ENCODE measurements at regions of chr3 and their contacts with region 1.

Region 1: DNA sequence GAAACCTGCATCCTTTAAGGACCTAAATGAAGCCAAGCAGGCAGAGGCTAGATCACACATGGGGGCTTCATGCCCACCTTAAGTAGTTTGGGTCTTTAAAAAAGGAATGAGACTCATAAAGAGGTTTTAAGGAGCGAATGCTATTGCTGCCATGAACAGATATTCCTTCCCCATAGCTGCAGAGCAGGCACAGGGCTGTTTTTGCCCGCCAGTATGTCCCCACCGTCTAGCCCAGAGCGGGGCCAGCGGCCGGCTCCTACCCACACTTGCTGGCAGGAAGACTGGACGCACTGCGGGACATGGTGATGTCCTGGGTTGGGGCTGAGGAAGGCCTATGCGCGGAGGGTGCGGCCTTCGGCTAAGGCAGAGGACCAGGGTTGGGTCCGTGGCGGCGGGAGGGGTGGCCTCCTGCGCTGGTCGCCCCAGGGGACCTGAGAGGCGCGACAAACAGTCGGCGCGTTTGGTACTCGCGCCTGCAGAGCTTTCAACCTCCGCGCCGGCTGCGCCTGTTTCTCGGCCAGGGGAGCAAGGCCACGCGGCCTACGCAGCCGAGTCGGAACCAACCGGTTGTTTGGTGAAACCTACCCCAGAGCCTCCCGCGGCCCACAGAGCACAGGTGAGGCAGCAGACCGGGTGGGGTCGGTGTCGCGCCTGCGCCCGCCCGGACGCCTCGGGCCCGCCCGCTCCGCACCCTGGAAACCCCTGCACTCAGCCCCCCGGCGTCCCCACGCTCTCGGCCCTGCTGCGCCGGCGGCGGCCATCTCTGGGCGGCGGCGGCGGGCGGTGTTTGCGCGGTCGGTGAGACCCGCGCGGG is at the start of gene FAIM:
- DNase-seq: peak; percentile 59 to 75
- ATAC-seq: peak; percentile 82 to 93 (median 86)
- H3K4me3 ChIP-seq: peak within 1 kb of the TSS; percentile 33 to 95 (median 78)
- H3K27ac ChIP-seq: peak within 1 kb of the TSS; percentile 86 to 99 (median 96)
- H3K4me1 ChIP-seq: peaks cover 3 to 15% (median 12%) of the 10 kb centered on the region in 9 donors
- H3K27me3 ChIP-seq: no peaks in the 10 kb centered on the region
- CTCF ChIP-seq: no peak
- total RNA-seq, gene FAIM: 1.5 to 3.6 (median 2.7) TPM

Region 2: GRCh38 chr3:138329127-138329983 is 279.2 kb before region 1 on chr3 and contains the start of gene NME9:
- intact Hi-C with region 1: no loop called
- DNase-seq: peak; percentile 87 to 88
- ATAC-seq: peak; percentile 94 to 97 (median 96)
- H3K4me3 ChIP-seq: peak within 1 kb of the TSS; percentile 48 to 81 (median 68)
- H3K27ac ChIP-seq: peak within 1 kb of the TSS in 9 of 10 donors; percentile 25 to 74 (median 54)
- H3K4me1 ChIP-seq: peaks cover 0 to 25% (median 8%) of the 10 kb centered on the region in 9 donors
- H3K27me3 ChIP-seq: peaks cover 0 to 6% (median 0%) of the 10 kb centered on the region in 7 donors
- CTCF ChIP-seq: peak in 8 of 9 donors; percentile 22 to 66 (median 58)
- total RNA-seq, gene NME9: 0.44 TPM in 1 of 10 donors, not detected in the others

Region 3: DNA sequence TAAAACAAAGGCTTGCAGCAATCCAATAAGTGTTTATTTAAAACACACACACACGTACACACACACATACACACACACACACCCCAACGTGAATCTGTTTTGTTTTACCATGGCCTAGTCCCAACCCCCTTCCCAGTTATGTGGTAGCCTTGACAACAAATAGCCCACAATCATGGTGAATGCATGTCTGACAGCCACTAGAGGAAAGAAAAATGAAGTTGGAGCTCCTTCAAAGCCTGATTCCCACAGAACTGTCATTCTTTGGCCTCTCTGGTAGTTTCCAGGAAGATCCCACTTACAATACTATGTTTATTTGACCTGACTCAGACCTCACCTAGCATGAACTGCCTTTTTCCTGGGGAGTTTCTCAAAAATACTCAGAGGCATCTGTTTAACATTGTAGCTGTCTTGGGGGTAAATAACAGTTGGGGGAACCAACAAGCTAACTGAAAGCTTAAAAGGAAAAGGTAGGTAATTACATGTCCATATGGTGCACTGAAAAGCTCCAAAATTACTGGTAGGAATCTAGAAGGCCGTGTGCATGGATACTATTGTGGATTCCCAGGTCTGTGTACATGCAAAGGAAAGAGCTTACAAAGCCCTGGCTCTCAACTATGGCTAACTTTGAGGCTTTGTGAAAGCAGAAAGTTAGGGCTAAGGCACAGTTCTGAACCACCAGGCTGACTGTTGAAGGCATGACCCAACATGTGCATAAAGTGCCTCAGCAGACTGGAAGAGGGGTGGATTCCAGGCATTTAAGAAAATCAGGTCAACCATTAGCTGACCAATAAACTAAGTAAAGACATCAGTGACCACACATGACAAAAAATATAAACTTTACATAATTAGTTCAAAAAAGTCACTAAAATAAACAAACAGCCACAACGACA is 65.4 kb after region 1 on chr3:
- intact Hi-C with region 1: loop called in 2 of 10 experiments (anchors 10 kb)
- DNase-seq: no peak
- ATAC-seq: no peak
- H3K4me3 ChIP-seq: no peak overlapping the region
- H3K27ac ChIP-seq: no peak overlapping the region
- H3K4me1 ChIP-seq: peaks cover 0 to 26% (median 4%) of the 10 kb centered on the region in 9 donors
- H3K27me3 ChIP-seq: no peaks in the 10 kb centered on the region
- CTCF ChIP-seq: no peak

Region 4: GRCh38 chr3:138686771-138687221 is 78.3 kb after region 1 on chr3:
- intact Hi-C with region 1: loop called in 1 of 10 experiments (anchors 10 kb)
- DNase-seq: no peak
- ATAC-seq: no peak
- H3K4me3 ChIP-seq: no peak overlapping the region
- H3K27ac ChIP-seq: no peak overlapping the region
- H3K4me1 ChIP-seq: peaks cover 0 to 5% (median 0%) of the 10 kb centered on the region in 9 donors
- H3K27me3 ChIP-seq: no peaks in the 10 kb centered on the region
- CTCF ChIP-seq: no peak

Region 5: DNA sequence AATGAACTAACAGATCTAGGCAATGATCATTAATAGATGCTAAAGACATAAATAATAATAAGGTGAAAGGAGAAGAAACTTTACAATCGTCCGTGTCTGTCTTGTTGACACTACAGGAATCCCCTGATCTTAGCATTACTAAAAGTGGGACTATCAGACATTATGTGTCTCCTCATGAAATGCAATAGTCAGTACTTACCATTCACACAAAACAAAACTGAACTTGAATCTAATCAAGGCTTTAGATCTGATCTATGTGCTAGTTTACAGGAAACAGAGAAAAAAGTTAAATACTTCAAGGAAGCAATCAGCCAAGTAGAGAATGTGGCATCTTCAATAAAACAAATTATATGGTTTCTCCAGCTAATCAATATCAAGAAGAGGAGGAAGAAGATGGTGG is 152.5 kb after region 1 on chr3:
- intact Hi-C with region 1: no loop called
- DNase-seq: no peak
- ATAC-seq: no peak
- H3K4me3 ChIP-seq: no peak overlapping the region
- H3K27ac ChIP-seq: no peak overlapping the region
- H3K4me1 ChIP-seq: no peaks in the 10 kb centered on the region
- H3K27me3 ChIP-seq: no peaks in the 10 kb centered on the region
- CTCF ChIP-seq: no peak

Region 6: DNA sequence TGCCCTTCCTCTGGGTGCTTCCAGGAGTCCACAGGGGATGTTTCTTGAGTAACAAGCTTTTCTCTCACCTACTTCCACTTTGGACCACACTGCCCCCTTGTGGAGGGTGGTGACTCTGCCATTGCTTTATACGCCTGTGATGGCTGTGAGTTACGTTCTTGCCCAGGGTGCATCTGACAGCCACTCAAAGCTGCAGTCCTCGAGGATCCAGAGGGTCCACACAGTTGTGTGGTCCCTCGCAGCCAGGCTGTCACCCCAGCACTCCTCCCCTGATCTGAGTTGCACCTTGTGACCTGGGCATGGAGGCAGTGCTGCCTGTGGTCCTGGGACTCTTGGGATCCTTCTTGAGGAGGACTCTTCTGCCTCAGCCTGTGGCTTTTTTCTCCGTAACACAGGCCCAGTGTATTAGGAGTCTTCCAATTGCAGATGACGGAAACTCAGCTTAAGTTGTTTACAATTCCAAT is 315.0 kb after region 1 on chr3:
- intact Hi-C with region 1: loop called in 3 of 10 experiments (anchors 5 kb)
- DNase-seq: peak; percentile 71 to 81
- ATAC-seq: peak; percentile 61 to 82 (median 78)
- H3K4me3 ChIP-seq: no peak overlapping the region
- H3K27ac ChIP-seq: no peak overlapping the region
- H3K4me1 ChIP-seq: peaks cover 0 to 6% (median 0%) of the 10 kb centered on the region in 9 donors
- H3K27me3 ChIP-seq: peaks cover 0 to 6% (median 0%) of the 10 kb centered on the region in 7 donors
- CTCF ChIP-seq: peak; percentile 82 to 95 (median 90)

Measured in heart right ventricle (tissue), 16 donors.